ENCODE measurements at regions of chr10 and their contacts with region 1.

Region 1: GRCh38 chr10:71212318-71213126 is at the start of gene UNC5B:
- DNase-seq: peak; percentile 44 to 93
- H3K4me3 ChIP-seq: peak within 1 kb of the TSS; percentile 86 to 92
- H3K27ac ChIP-seq: peak within 1 kb of the TSS; percentile 83 to 84
- H3K4me1 ChIP-seq: peaks cover 0 to 17% of the 10 kb centered on the region in 2 donors
- H3K27me3 ChIP-seq: no peaks in the 10 kb centered on the region
- CTCF ChIP-seq: peak in 2 of 3 experiments; percentile 4 to 66
- total RNA-seq, gene UNC5B: 42.4 TPM

Region 2: DNA sequence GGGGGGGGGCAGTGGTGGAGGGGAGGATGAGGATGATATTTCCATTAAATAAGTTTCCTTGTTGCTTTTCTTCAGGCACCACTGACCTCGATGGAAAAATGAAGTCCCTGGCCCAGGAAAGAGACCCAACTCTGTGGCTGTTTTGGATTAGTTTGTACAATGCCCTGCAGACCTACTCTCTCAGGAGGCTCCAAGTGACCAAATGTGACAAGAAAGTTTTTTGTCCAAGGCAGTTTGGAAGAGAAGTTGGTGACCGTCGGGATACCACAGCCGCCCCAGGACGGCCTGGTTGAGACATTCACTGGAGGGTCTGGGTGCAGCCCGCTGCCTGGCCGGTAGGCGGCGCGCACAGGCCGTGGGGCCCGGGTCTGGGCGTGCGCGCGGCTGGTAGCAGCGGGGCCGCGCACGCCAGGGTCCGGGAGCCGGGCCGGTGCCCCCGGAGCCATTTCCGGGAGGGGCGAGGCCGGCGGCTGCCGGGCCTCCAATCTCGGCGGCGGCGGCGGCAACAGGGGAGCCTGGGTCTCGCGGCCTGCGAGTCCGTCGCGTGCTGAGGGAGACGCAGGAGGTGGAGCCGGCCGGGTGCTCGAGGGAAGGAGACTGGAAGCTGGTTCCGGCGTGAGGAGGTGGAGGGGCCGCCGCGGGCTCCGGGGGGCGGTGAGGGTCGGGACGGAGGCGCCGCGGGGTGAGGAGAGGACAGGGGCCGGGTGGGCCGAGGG is 396.9 kb before region 1 on chr10 and contains the start of gene SGPL1:
- intact Hi-C with region 1: loop called (anchors 5 kb)
- DNase-seq: peak; percentile 39 to 92
- H3K4me3 ChIP-seq: peak within 1 kb of the TSS; percentile 82 to 90
- H3K27ac ChIP-seq: peak within 1 kb of the TSS; percentile 91 to 98
- H3K4me1 ChIP-seq: peaks cover 0 to 5% of the 10 kb centered on the region in 2 donors
- H3K27me3 ChIP-seq: no peaks in the 10 kb centered on the region
- CTCF ChIP-seq: peak; percentile 81 to 99 (median 86)
- total RNA-seq, gene SGPL1: 6.2 TPM

Region 3: DNA sequence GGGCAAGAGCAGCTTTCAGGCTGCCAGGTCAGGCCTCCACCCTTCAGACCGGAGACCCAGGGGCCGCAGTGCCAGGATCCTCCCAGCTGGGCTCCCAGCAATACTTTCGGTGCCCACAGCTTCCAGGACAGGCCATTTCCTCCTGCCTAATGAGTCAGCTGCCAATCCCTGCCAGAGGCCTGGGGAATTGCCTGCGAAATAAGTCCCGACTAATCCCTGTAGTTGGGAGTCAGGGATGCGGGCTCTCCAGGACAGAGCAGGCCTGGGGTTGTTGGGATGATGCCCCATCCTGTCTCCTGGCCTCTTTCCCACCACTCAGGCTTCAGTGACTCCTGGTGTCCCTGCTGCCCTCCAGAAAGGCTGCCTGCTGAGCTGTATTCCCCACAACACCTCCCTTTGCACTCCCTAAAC is 143.7 kb before region 1 on chr10:
- intact Hi-C with region 1: loop called (anchors 5 kb)
- DNase-seq: peak; percentile 58 to 90
- H3K4me3 ChIP-seq: no peak overlapping the region
- H3K27ac ChIP-seq: peak overlapping the region; percentile 86 to 89
- H3K4me1 ChIP-seq: peaks cover 5 to 21% of the 10 kb centered on the region in 2 donors
- H3K27me3 ChIP-seq: no peaks in the 10 kb centered on the region
- CTCF ChIP-seq: no peak

Region 4: GRCh38 chr10:71128311-71128980 is 84.1 kb before region 1 on chr10:
- intact Hi-C with region 1: no loop called
- DNase-seq: no peak
- H3K4me3 ChIP-seq: no peak overlapping the region
- H3K27ac ChIP-seq: no peak overlapping the region
- H3K4me1 ChIP-seq: peaks cover 5 to 8% of the 10 kb centered on the region in 2 donors
- H3K27me3 ChIP-seq: no peaks in the 10 kb centered on the region
- CTCF ChIP-seq: no peak

Region 5: DNA sequence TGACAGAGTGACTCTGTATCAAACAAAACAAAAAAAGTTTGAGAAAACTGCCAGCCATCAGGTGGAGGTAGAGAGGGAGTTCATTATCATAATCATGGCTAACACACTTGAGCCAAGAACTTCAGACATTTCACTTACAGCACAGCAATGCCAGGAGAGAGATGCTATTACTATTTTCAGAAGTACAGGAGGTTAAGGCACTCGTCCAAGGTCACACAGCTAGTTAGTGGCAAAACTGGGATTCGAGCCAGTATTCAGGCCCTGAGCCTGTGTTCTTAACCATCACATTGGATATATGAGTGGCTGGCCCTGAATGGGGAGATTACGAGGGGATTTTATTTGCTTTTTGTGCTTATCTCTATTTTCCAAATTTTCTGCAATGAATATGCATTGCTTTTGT is 24.9 kb before region 1 on chr10:
- intact Hi-C with region 1: no loop called
- DNase-seq: no peak
- H3K4me3 ChIP-seq: no peak overlapping the region
- H3K27ac ChIP-seq: no peak overlapping the region
- H3K4me1 ChIP-seq: no peaks in the 10 kb centered on the region
- H3K27me3 ChIP-seq: no peaks in the 10 kb centered on the region
- CTCF ChIP-seq: no peak

Region 6: DNA sequence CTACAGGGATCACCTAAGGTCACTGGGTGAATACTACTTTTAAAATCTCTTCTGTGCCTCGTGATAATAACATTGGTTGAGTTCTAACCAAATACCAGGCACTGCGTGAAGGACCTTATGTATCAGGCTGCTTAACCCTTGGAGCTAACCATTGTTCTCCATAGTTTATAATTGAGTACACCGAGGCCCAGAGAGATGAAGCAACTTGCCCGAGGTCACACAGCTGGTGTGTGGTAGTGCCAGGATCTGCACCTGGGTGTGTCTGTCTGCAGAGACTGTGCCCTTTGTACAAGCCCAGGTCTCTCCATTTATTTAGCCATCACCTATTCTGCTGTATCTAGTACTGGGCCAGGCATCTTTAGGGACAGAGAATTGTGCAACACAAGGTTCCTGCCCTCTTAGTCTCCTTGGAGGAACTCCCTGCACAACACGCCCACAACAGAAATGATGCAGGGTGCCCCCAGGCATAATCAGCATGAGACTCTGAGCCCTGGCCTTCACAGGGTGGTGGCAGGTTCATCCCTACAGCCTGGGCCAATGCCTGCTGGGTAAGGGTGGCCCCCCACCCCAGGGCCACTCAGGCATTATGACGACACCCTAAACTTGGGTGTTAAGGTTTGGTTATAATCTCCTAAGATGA is 31.4 kb after region 1 on chr10:
- intact Hi-C with region 1: loop called (anchors 2 kb)
- DNase-seq: no peak
- H3K4me3 ChIP-seq: peak overlapping the region in 1 of 2 donors; percentile 56
- H3K27ac ChIP-seq: peak overlapping the region; percentile 20 to 36
- H3K4me1 ChIP-seq: peaks cover 12 to 27% of the 10 kb centered on the region in 2 donors
- H3K27me3 ChIP-seq: no peaks in the 10 kb centered on the region
- CTCF ChIP-seq: no peak

Region 7: GRCh38 chr10:71268247-71268691 is 55.7 kb after region 1 on chr10:
- intact Hi-C with region 1: loop called (anchors 1 kb)
- DNase-seq: peak in 1 of 2 donors; percentile 70
- H3K4me3 ChIP-seq: peak overlapping the region in 1 of 2 donors; percentile 6
- H3K27ac ChIP-seq: peak overlapping the region; percentile 26 to 49
- H3K4me1 ChIP-seq: peaks cover 0 to 8% of the 10 kb centered on the region in 2 donors
- H3K27me3 ChIP-seq: no peaks in the 10 kb centered on the region
- CTCF ChIP-seq: peak; percentile 45 to 68 (median 53)

Region 8: DNA sequence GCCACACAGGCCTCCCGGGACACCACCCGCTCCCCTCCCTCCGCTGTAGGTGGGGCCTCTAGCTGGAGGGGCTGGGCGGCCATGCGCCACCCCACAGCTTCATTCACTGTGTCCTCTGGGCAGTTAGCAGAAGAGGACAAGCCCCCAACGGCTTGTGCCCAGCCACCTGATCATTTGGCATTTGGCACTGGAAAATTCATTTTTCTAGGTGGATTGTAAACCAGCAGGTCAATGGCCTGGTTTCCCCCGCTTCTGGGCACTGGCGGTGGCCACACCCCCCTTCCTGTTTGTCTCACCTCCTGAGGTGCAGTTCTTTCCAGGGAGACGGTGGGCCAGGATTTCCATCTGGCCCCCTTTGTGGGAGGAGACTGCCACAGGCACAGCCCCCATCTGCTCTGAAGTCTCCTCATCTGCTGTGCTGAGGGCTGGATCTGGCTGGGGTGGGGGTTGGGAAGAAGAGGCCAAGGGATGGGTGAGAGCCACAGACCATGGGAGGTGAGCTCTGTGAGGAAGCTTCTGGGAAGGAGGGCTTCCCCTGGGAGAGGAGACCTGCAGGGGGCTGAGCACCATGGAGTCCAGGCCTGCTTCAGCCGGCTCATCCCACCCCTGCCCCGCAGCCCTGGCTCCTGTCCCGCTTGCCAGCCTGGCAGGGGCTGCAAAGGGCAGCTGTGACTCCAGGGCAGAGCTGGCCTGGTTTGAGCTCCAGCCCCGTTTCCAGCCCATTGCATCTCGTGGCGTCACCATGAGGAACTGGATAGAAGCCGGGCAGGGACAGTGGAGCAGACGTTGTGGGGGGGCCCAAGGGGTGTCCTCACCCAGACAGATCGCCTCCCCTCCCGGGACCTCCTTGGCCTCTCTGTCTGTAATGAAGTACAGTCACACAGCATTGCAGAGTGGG is 66.4 kb after region 1 on chr10:
- intact Hi-C with region 1: no loop called
- DNase-seq: no peak
- H3K4me3 ChIP-seq: no peak overlapping the region
- H3K27ac ChIP-seq: no peak overlapping the region
- H3K4me1 ChIP-seq: no peaks in the 10 kb centered on the region
- H3K27me3 ChIP-seq: no peaks in the 10 kb centered on the region
- CTCF ChIP-seq: no peak

Region 9: DNA sequence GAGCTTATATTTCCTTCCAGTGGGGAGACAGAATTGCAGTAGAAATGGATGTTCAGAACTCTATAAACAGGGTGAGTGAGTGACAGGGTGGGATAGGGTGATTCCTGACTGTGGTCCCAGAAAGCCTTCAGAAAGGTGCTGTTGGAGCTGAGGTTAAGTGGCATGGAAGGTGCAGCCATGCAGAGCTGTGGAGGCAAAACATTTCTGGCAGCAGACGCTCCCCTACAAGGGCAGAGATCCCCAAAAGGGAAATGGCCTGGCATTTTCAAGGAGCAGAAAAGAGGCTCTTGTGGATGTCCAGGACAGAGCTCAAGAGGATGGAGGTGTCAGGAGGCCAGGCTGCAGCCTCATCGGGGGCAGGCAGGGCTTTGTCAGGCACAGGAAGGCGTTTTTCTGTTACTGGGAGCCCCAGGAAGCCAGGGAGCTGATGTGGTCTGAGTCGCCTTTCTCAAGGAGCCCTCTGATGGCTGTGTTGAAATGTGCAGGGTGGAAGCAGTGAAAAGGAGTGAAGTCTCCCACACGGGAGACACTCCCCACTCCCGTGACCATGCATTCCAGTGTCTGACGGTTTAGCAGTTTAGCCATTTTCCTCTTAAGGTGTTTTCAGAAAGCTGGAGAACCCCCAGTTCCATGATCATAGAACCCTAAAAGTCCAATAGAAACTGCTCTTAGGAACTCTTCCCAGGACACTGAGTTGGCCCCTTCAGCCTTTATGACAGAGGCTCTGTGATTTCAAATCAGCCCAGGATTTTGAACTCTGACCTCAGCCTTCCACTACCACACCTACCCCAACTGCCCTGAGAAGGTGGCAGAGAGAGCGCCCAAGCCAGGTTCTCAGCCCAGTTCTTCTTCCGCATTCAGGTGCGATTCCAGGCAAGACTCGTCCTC is 410.8 kb after region 1 on chr10:
- intact Hi-C with region 1: no loop called
- DNase-seq: no peak
- H3K4me3 ChIP-seq: no peak overlapping the region
- H3K27ac ChIP-seq: no peak overlapping the region
- H3K4me1 ChIP-seq: peaks cover 14 to 22% of the 10 kb centered on the region in 2 donors
- H3K27me3 ChIP-seq: no peaks in the 10 kb centered on the region
- CTCF ChIP-seq: peak in 1 of 3 experiments; percentile 26

Region 10: GRCh38 chr10:71850637-71851464 is 638.3 kb after region 1 on chr10 and contains the start of gene PSAP:
- intact Hi-C with region 1: loop called (anchors 10 kb)
- DNase-seq: peak; percentile 97 to 100
- H3K4me3 ChIP-seq: peak within 1 kb of the TSS; percentile 93 to 97
- H3K27ac ChIP-seq: peak within 1 kb of the TSS; percentile 97
- H3K4me1 ChIP-seq: peaks cover 0 to 25% of the 10 kb centered on the region in 2 donors
- H3K27me3 ChIP-seq: no peaks in the 10 kb centered on the region
- CTCF ChIP-seq: no peak
- total RNA-seq, gene PSAP: 653 TPM